Panc1 (cell line): ENCODE measurements at regions of chr3 and their contacts with region 1.

Region 1: DNA sequence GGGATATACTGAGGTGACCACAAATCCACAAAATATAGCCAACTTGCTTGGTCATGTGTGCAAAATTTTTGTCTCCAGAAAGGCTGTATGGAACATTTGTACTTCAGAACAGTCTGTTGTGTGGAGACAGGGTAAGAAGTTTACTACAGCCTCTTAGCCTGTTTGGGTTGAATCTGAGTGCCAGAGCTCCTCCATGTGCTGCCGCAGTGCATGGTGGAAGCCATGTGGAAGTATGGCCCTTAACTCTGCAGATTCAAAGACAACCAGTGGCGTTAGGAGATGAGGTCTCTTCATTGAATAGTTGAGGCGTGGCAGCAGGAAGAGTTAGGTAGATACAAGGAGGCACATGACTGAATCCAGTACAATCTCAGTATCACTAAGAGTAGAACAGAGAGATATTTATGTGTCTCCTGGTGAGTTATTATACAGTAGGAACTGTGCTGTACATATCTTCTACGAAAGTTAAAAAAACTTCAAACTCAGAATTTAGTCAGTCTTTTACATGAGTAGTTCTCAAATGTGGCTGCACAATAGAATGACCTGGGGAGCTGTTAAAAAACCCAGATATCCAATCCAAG is 9.4 kb downstream of the EIF2A start:
- DNase-seq: no peak
- ATAC-seq: peak; percentile 67; the same call in 1 of the 2 replicates
- H3K4me3 ChIP-seq: no peak overlapping the region
- H3K27ac ChIP-seq: no peak overlapping the region
- H3K4me1 ChIP-seq: no peaks in the 10 kb centered on the region
- H3K27me3 ChIP-seq: no peaks in the 10 kb centered on the region
- CTCF ChIP-seq: no peak

Region 2: DNA sequence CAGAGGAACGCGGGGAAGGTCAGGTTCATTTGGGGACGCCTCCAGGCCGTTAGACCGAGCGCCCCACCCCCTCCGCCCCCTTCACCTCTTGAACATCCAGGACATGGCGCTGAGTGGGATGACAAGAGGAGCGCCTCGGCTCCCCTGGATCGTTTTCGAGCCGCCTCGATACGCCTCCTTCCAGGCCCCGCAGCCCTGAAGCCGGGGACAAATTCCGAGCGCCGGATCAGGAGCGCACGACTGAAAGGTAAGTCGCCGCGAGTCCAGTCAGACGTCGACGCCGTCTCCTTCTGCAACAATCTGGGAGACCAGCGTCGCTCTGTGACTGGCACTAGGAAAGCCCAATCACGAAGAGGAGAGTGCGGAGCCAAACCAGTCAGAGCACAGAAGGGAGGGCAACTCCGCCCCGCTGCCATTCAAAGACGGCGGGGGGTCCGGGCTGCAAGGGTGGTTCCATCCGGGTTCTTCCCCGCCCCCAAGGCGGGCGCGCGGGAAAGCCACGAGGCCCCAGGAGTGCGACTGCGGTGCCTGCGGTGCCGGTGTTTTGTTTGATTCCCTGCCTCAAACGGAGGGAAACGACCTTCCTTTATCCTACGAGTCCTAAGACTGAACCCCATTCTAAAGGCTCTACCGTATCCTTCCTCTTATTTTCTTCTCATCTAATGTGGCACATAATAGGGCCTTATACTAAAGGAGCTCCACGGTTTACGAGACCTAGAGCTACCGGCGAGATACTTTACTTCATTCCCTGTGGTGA is 1469.5 kb before region 1 on chr3 and contains the start of gene HLTF:
- CTCF ChIA-PET with region 1: no interaction called
- POLR2A ChIA-PET with region 1: interaction called, 11 read pairs
- in situ Hi-C with region 1: no loop called
- intact Hi-C with region 1: no loop called
- DNase-seq: peak; percentile 96
- ATAC-seq: peak; percentile 99
- H3K4me3 ChIP-seq: peak within 1 kb of the TSS; percentile 69 to 75
- H3K27ac ChIP-seq: peak within 1 kb of the TSS; percentile 93
- H3K4me1 ChIP-seq: 0 out of 2 replicates have a peak, but pooled peaks cover 4% of the 10 kb centered on the region
- H3K27me3 ChIP-seq: no peaks in the 10 kb centered on the region
- CTCF ChIP-seq: no peak
- total RNA-seq, gene HLTF: 106 TPM

Region 3: GRCh38 chr3:152524198-152525140 is 1968.5 kb after region 1 on chr3:
- CTCF ChIA-PET with region 1: no interaction called
- POLR2A ChIA-PET with region 1: no interaction called
- in situ Hi-C with region 1: no loop called
- intact Hi-C with region 1: no loop called
- DNase-seq: peak; percentile 56
- ATAC-seq: no peak
- H3K4me3 ChIP-seq: no peak overlapping the region
- H3K27ac ChIP-seq: no peak overlapping the region
- H3K4me1 ChIP-seq: no peaks in the 10 kb centered on the region
- H3K27me3 ChIP-seq: no peaks in the 10 kb centered on the region
- CTCF ChIP-seq: peak; percentile 77; the same call in 1 of the 2 replicates